HEK293T (cell line): ENCODE measurements at regions of chr6 and their contacts with region 1.

Region 1: DNA sequence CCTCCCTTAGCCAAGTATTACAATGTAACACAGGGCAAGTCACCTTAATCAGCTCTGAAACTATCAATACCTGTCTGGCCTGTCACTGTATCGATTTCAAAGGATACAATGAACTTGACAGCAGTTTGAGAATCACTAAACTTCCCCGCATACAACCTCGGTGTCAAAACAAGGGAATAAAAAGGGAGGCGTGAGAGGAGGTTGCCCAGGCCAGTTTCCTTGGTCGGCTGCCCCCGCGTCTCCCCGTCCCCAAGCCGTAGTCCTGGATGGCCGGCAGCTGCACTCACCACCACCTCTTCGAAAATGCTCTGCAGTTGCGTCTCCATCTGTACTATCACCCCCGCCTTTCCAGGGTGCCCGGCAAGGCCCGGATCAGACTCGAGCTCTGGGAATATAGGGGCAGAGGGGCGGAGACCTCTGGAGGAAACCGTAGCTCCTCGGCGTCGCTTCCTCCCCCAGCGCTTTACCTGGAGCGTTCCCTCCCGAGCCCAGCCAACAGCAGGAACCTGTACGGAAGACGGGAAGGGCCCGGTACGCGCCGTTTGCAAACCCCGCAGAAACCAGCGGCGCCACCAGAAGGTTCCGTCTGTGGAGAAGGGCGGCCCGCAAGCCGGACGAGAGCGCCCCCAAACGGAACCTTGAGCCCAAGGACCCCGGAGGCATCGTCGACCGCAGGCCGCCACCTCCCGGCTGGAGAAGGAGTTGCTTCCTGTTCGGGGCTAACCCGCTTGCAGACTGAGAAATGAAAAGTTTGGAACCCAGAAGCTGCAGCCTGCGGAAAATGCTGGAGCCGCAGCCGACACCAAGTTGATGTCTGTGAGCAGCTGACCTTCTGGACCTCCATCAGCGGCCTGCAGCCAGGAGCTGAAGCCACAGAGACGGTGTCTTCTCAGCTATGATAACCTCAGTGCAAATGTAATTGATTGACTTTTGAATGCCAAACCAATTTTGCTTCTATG is at the start of gene MED23:
- DNase-seq: peak; percentile 90

Region 2: GRCh38 chr6:131602781-131603312 is 25.2 kb before region 1 on chr6:
- CTCF ChIA-PET with region 1: interaction called, 7 read pairs
- POLR2A ChIA-PET with region 1: interaction called, 11 read pairs
- DNase-seq: no peak

Region 3: DNA sequence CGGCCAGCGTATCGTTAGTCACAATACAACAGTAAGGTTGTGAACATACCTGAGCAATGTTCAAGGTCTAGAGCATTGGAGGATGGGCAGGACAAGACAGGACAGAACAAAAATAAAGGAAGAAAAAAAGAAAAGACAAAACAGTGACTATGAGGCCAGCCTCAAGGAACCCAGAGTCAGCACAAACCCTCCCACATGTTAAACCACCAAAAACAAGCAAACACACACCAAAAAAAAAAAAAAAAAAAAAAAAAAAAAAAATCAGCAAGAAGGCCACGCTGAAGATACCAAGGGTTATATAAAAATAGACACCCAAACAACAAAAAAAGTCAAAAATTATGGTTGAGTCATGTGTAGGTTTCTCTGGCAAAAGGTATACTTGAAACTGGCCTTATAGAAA is 12.7 kb before region 1 on chr6:
- CTCF ChIA-PET with region 1: interaction called, 15 read pairs
- POLR2A ChIA-PET with region 1: interaction called, 6 read pairs
- DNase-seq: no peak